OCI-LY7 (cell line): ENCODE measurements at regions of chr1 and their contacts with region 1.

Region 1: DNA sequence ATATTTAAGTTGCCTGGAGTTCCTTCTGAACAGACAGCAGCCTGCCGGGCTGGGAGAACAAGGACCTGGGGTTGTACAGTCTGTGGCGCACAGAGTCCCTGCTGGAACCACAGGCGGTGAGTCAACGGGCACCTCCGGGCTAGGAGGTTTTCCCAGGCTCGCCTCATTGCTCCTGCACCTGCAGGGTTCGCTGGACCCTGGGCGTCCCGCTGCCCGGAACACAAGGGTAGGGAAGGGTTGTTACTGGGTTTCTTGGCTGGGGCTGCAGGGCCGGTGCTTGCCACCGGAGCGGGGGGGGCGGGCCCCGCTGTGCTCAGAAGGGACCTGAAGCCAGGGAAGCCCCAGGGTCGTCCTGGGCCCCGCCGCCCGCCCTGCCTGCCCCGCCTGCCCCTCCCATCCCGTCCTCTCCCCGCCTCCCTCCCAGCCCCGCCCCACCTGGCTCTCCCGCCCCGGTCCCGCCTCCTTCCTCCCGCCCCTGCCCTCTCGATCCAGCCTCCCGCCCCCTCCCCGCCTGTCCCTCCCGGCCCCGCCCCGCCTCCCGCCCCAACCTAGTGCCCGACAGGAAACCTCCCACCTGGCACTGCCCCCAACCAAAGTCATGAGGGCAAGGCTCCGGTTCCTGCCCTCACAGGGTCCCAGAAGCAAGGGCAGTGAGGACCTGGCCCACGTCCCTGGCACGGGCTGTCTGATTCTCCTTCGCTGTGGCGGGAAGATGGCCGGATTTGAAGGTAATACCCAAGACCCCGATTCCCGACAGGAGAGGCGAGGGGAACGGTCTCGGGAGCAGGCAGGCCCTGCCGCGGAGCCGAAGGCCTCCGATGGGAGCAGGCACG is 6.8 kb downstream of the JMJD4 start:
- DNase-seq: peak; percentile 79
- H3K4me3 ChIP-seq: peak overlapping the region; percentile 69
- H3K27ac ChIP-seq: peak overlapping the region; percentile 10
- H3K4me1 ChIP-seq: peaks cover 31% of the 10 kb centered on the region
- CTCF ChIP-seq: no peak

Region 2: GRCh38 chr1:227563324-227564201 is 164.7 kb before region 1 on chr1 and contains the start of gene ZNF678:
- CTCF ChIA-PET with region 1: no interaction called
- POLR2A ChIA-PET with region 1: no interaction called
- intact Hi-C with region 1: loop called (anchors 5 kb)
- DNase-seq: peak; percentile 96
- H3K4me3 ChIP-seq: peak within 1 kb of the TSS; percentile 84
- H3K27ac ChIP-seq: peak within 1 kb of the TSS; percentile 78
- H3K4me1 ChIP-seq: peaks cover 9% of the 10 kb centered on the region
- CTCF ChIP-seq: no peak
- total RNA-seq, gene ZNF678: 23.9 and 28.3 TPM in 2 replicates